ENCODE measurements at regions of chr15 and their contacts with region 1.

Region 1: GRCh38 chr15:68304589-68305337 is 27.2 kb downstream of the FEM1B start:
- DNase-seq: no peak
- H3K4me3 Mint-ChIP-seq: no peak overlapping the region
- H3K27ac Mint-ChIP-seq: no peak overlapping the region
- H3K4me1 Mint-ChIP-seq: peaks cover 7% of the 10 kb centered on the region
- H3K27me3 Mint-ChIP-seq: peaks cover 3% of the 10 kb centered on the region

Region 2: DNA sequence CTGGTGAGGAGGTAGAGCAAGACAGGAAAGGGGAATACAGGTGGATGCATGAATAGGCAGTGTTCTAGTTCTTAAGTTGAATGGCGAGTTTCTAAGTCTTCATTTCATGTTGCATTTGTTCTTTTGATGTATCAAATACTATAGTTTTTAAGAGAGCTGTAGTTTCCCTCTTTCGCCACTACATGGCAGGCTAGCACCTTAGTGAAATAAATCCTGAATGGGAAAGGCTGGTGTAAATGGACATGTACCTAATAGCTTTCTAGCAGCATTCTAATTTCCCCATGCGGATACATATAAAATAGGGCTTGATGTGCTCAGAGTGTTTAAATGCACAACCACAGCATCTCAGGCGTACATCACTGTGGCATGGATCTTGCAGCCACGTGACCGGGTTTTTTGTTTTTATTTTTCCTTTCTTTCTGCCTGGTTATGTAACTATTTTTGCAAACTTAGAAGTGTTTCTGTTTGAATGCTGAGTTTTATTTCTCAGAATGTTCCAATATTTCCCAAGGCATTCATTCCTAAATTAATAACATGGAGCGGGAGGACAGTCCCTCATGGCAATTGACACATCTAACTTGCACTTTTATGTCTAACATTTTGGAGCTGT is 51.7 kb before region 1 on chr15:
- CTCF ChIA-PET with region 1: interaction called, 66 read pairs
- POLR2A ChIA-PET with region 1: no interaction called
- intact Hi-C with region 1: loop called (anchors 1 kb)
- DNase-seq: peak; percentile 36
- H3K4me3 Mint-ChIP-seq: no peak overlapping the region
- H3K27ac Mint-ChIP-seq: no peak overlapping the region
- H3K4me1 Mint-ChIP-seq: peaks cover 4% of the 10 kb centered on the region
- H3K27me3 Mint-ChIP-seq: peaks cover 3% of the 10 kb centered on the region

Region 3: GRCh38 chr15:68292157-68292781 is 12.5 kb before region 1 on chr15:
- CTCF ChIA-PET with region 1: interaction called, 20 read pairs
- POLR2A ChIA-PET with region 1: no interaction called
- intact Hi-C with region 1: no loop called
- DNase-seq: no peak
- H3K4me3 Mint-ChIP-seq: no peak overlapping the region
- H3K27ac Mint-ChIP-seq: no peak overlapping the region
- H3K4me1 Mint-ChIP-seq: peaks cover 48% of the 10 kb centered on the region
- H3K27me3 Mint-ChIP-seq: no peaks in the 10 kb centered on the region

Region 4: DNA sequence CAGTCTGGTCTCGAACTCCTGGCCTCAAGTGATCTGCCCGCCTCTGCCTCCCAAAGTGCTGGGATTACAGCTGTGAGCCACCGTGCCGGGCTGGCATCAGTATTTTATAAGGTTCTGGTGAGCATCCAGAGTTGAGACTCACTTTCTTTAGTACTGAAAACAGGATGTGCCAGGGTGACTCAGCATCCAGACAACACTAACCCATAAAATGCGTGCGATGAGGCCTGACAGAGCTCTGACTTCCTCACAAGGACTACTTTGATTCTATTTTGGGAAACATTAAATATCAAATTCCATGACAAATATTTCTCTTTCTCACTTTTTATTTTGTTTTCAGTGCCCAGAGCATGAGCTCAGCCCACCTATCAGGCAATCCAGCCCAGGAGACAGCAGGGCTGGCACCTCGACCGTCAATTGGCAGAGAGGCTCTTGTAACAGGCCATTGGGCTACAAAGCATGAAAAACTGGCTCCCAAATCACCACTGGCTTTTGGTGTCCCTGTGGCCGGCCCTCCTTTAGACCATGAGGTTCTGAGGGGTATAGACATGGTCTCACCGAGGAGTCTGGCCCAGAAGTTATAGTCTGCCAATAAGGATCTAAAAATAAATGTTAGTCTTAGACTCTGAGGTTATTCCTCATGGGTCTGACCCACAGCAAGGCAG is 47.8 kb after region 1 on chr15:
- CTCF ChIA-PET with region 1: no interaction called
- POLR2A ChIA-PET with region 1: no interaction called
- intact Hi-C with region 1: no loop called
- DNase-seq: peak; percentile 49
- H3K4me3 Mint-ChIP-seq: no peak overlapping the region
- H3K27ac Mint-ChIP-seq: peak overlapping the region; percentile 55
- H3K4me1 Mint-ChIP-seq: peaks cover 6% of the 10 kb centered on the region
- H3K27me3 Mint-ChIP-seq: no peaks in the 10 kb centered on the region

Region 5: GRCh38 chr15:68536331-68537095 is 231.8 kb after region 1 on chr15:
- CTCF ChIA-PET with region 1: interaction called, 13 read pairs
- POLR2A ChIA-PET with region 1: no interaction called
- intact Hi-C with region 1: loop called (anchors 1 kb)
- DNase-seq: no peak
- H3K4me3 Mint-ChIP-seq: no peak overlapping the region
- H3K27ac Mint-ChIP-seq: no peak overlapping the region
- H3K4me1 Mint-ChIP-seq: no peaks in the 10 kb centered on the region
- H3K27me3 Mint-ChIP-seq: peaks cover 20% of the 10 kb centered on the region

Region 6: GRCh38 chr15:68550481-68551295 is 245.9 kb after region 1 on chr15:
- CTCF ChIA-PET with region 1: interaction called, 13 read pairs
- POLR2A ChIA-PET with region 1: no interaction called
- intact Hi-C with region 1: no loop called
- DNase-seq: peak; percentile 81
- H3K4me3 Mint-ChIP-seq: no peak overlapping the region
- H3K27ac Mint-ChIP-seq: no peak overlapping the region
- H3K4me1 Mint-ChIP-seq: peaks cover 6% of the 10 kb centered on the region
- H3K27me3 Mint-ChIP-seq: peaks cover 49% of the 10 kb centered on the region

Measured in activated CD4-positive, alpha-beta memory T cell treated with anti-CD3 and anti-CD28 coated beads for 36 hours (primary cell).